ENCODE measurements at regions of chr4 and their contacts with region 1.

Region 1: GRCh38 chr4:126223784-126224407 is 909.1 kb downstream of the FAT4 start:
- DNase-seq: no peak

Region 2: DNA sequence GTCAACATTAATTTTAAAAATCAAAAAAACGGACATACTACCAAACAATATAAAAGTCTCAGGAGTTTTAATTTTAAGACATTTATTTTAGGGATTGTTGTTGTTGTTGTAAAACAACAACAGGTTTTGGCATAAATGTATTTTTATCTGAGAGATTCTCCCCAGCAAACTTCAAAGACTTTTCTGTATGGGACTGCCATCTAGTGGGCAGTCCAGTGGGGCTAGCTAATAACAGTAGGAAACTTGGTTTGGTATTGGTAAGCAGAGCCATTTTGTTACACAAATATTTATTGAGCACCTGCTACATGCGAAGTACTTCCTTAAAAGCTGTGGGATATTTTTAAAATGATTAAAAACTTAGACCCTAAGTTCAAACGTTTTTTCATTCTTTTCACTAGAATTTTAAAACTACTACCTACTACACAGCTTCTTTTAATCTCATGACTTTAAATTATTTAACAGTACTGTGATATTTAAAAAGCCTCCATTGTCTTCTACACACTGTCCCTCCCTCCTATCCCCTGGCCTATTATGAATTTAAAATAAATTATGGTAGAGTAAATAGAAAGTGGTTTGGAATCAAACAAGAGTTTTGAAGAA is 380.5 kb after region 1 on chr4:
- intact Hi-C with region 1: loop called (anchors 10 kb)
- DNase-seq: peak in 3 of 10 donors; percentile 18 to 45 (median 41)